CD4-positive, alpha-beta memory T cell (primary cell): ENCODE measurements at regions of chr1 and their contacts with region 1.

Region 1: DNA sequence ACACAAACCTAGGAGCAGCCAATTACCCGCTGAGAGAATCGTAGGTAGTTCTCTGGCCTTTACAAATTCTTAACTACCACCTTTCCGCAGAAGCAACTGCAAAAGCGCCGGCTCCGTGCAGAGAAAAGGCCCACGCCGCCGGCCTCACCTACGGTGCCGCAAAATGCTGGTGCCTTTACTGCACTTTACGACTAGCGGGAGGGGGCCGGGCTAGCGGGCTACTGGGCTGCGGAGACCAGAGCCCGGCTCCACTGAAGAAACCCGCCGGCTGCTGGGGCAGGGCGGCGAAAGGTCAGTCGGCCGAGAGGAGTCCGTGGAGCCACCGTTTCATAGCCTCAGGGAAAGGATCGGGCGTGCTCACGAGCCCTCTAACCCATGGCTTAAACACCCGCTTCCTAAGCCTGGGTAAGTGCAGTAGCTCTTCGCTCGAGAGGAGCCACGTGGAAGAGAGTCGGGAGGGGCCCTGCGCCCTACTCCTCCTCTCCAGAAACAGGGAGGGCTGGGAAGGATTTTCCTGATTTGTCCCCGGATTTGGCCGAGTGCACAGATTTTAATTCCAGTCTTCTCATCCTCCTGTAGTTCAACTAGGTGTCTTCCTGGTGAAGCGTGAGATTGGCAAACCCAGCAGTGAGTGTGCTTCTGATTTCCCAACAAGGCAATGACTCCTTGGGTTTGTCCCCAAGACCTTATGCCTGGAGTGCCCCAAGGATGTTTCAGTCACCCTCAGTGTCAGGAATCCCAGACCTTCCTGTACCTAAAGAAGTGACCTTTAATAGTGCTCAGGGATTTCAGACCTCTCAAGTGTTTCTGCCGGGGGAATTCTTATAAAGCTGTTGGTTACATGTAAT is at the start of gene DPH5:
- DNase-seq: peak; percentile 86 to 91 (median 87)
- H3K4me3 ChIP-seq: peak within 1 kb of the TSS; percentile 78 to 88
- H3K4me3 Mint-ChIP-seq: peak within 1 kb of the TSS; percentile 85 to 99 (median 96)
- H3K27ac ChIP-seq: peak within 1 kb of the TSS; percentile 76
- H3K27ac Mint-ChIP-seq: peak within 1 kb of the TSS; percentile 96 to 99 (median 98)
- H3K4me1 ChIP-seq: peaks cover 62% of the 10 kb centered on the region
- H3K4me1 Mint-ChIP-seq: peaks cover 46 to 81% (median 61%) of the 10 kb centered on the region in 4 donors
- H3K27me3 ChIP-seq: no peaks in the 10 kb centered on the region
- H3K27me3 Mint-ChIP-seq: no peaks in the 10 kb centered on the region
- total RNA-seq, gene DPH5: 49.3 to 58.3 TPM

Region 2: DNA sequence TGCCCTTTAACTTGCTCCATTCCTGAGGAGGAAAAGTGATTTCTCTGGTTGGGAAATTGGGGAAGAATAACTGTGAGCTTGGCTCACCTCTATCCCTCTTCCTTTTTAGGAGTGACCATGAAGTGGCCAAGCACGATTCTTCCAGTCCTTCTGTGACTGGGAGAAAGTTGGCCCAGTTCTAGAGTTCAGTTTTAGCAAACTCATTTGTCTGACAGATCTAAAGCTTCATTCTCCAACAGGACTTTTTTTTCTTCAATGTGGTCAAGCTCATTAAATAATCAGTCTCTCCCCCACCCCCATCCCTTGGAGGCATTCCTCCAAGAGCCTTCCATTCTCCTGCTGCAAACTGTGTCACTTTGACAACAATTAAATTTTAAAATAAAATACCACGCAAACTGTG is 1182.1 kb before region 1 on chr1:
- CTCF ChIA-PET with region 1: no interaction called
- POLR2A ChIA-PET with region 1: no interaction called
- intact Hi-C with region 1: no loop called
- DNase-seq: no peak
- H3K4me3 ChIP-seq: no peak overlapping the region
- H3K4me3 Mint-ChIP-seq: no peak overlapping the region
- H3K27ac ChIP-seq: no peak overlapping the region
- H3K27ac Mint-ChIP-seq: no peak overlapping the region
- H3K4me1 ChIP-seq: no peaks in the 10 kb centered on the region
- H3K4me1 Mint-ChIP-seq: peaks cover 0 to 5% (median 0%) of the 10 kb centered on the region in 4 donors
- H3K27me3 ChIP-seq: no peaks in the 10 kb centered on the region
- H3K27me3 Mint-ChIP-seq: no peaks in the 10 kb centered on the region

Region 3: DNA sequence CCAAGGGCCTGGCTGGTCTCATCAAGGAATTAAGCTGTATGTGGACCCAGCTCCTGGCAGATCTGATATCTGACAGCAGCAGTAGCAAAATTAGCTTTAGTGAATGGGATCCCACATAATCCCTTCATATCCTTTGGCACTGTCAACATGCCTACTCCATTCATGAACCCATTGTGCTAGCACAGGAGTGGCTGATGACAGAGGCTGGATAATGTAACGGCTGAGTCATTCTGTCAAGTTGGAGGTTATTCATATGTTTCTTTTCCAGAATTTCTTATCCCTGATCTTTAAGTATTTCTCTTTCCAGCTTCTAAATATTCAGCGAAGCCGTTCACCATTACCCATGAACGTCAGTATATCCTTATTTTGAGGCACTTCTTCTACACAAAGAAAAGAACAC is 215.5 kb before region 1 on chr1:
- CTCF ChIA-PET with region 1: no interaction called
- POLR2A ChIA-PET with region 1: no interaction called
- intact Hi-C with region 1: no loop called
- DNase-seq: no peak
- H3K4me3 ChIP-seq: no peak overlapping the region
- H3K4me3 Mint-ChIP-seq: no peak overlapping the region
- H3K27ac ChIP-seq: no peak overlapping the region
- H3K27ac Mint-ChIP-seq: no peak overlapping the region
- H3K4me1 ChIP-seq: no peaks in the 10 kb centered on the region
- H3K4me1 Mint-ChIP-seq: peaks cover 0 to 8% (median 3%) of the 10 kb centered on the region in 4 donors
- H3K27me3 ChIP-seq: peaks cover 7% of the 10 kb centered on the region
- H3K27me3 Mint-ChIP-seq: peaks cover 22 to 29% of the 10 kb centered on the region in 2 donors

Region 4: DNA sequence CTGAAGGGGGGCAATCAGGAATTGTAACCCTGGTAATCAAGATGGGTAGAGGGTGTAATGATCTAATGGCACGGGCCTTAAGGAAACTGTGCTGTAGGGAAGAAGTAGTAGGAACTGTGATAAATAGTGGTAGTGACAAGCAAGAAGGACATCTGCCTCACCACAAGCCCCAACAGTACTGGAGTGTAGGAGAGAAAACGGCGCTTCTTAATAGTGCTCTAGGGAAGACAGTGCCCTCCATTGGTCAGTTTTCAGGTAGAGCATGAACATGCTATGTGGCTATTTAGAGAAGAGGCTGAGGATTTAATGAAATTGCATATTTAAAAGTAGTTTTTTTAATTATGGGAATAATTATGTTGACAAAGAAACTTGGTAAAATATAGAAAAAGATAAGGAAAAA is 97.8 kb before region 1 on chr1:
- CTCF ChIA-PET with region 1: interaction called, 3 read pairs
- POLR2A ChIA-PET with region 1: interaction called, 6 read pairs
- intact Hi-C with region 1: loop called (anchors 1 kb)
- DNase-seq: no peak
- H3K4me3 ChIP-seq: peak overlapping the region in 1 of 2 donors; percentile 39
- H3K4me3 Mint-ChIP-seq: no peak overlapping the region
- H3K27ac ChIP-seq: peak overlapping the region; percentile 50
- H3K27ac Mint-ChIP-seq: no peak overlapping the region
- H3K4me1 ChIP-seq: peaks cover 95% of the 10 kb centered on the region
- H3K4me1 Mint-ChIP-seq: peaks cover 38 to 64% (median 49%) of the 10 kb centered on the region in 4 donors
- H3K27me3 ChIP-seq: no peaks in the 10 kb centered on the region
- H3K27me3 Mint-ChIP-seq: no peaks in the 10 kb centered on the region

Region 5: DNA sequence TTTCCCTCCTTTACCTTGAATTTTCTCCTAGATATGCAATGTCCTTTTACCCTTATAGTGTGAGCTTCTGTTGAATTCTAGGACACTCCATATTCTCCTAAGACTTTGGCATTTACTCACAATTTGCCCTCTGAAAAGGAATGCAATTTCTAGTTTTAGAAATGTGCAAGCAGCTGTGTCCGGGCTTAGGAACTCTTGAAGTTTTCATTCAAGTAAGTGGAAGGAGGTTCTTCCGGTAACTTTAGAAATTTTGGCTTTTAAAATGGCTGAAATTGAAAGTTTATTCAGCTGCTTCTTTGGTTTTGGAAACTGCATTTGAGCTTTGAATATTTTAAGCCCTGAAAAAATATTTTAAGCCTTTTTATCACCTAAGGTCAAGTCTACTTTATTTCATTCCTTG is 56.6 kb before region 1 on chr1:
- CTCF ChIA-PET with region 1: no interaction called
- POLR2A ChIA-PET with region 1: no interaction called
- intact Hi-C with region 1: no loop called
- DNase-seq: no peak
- H3K4me3 ChIP-seq: no peak overlapping the region
- H3K4me3 Mint-ChIP-seq: no peak overlapping the region
- H3K27ac ChIP-seq: no peak overlapping the region
- H3K27ac Mint-ChIP-seq: no peak overlapping the region
- H3K4me1 ChIP-seq: peaks cover 16% of the 10 kb centered on the region
- H3K4me1 Mint-ChIP-seq: peaks cover 27 to 48% (median 38%) of the 10 kb centered on the region in 4 donors
- H3K27me3 ChIP-seq: no peaks in the 10 kb centered on the region
- H3K27me3 Mint-ChIP-seq: no peaks in the 10 kb centered on the region

Region 6: DNA sequence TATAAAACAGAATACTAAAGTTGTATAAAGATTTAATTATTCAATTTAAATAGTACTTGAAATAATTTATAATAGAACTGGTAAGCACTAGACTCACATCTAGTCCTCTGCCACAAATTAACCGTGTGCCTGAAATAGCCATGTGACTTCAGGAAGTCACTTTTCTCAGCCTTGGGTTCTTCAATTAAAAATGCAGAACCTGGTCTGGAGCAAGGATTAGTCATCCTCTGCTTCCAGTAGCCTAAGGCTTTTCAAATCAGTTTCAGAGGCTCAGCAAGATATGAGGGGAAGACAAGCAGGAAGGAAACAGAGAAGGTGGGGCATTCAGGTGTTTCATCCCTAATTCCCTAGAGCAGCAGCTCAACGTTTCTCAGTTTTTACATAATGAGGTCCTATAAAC is 23.3 kb before region 1 on chr1:
- CTCF ChIA-PET with region 1: interaction called, 4 read pairs
- POLR2A ChIA-PET with region 1: interaction called, 10 read pairs
- intact Hi-C with region 1: no loop called
- DNase-seq: no peak
- H3K4me3 ChIP-seq: no peak overlapping the region
- H3K4me3 Mint-ChIP-seq: peak overlapping the region in 3 of 8 donors; percentile 10 to 71 (median 54)
- H3K27ac ChIP-seq: no peak overlapping the region
- H3K27ac Mint-ChIP-seq: peak overlapping the region; percentile 44 to 90 (median 76)
- H3K4me1 ChIP-seq: peaks cover 58% of the 10 kb centered on the region
- H3K4me1 Mint-ChIP-seq: peaks cover 46 to 64% (median 50%) of the 10 kb centered on the region in 4 donors
- H3K27me3 ChIP-seq: no peaks in the 10 kb centered on the region
- H3K27me3 Mint-ChIP-seq: no peaks in the 10 kb centered on the region

Region 7: DNA sequence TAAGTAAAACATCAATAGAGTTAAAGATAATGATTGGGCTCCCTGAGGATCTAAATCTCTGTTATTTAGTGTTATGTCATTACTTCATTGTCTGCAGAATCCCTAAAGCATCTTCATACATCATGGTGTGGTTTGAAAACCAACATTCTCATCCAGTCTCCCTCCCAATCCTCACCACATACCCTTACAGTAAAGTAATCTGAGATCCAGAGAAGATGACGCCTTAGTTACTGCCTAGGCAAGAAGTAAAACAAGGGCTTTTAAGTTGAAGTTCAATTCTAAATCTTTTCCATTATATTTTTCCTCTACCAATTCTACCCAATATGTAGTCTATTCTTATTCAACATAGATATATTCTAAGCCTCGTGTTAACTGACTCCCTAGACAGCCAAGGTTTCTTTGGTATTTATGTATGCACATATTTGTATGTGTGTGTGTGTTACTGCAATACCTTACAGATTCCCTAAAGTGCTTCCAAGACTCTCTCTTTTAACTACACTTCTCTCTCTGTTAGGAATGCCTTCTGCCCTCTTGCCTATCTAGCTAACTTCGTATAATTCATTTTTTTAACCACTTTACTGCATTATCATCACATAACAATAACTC is 17.5 kb before region 1 on chr1:
- CTCF ChIA-PET with region 1: interaction called, 4 read pairs
- POLR2A ChIA-PET with region 1: interaction called, 10 read pairs
- intact Hi-C with region 1: loop called (anchors 2 kb)
- DNase-seq: no peak
- H3K4me3 ChIP-seq: no peak overlapping the region
- H3K4me3 Mint-ChIP-seq: no peak overlapping the region
- H3K27ac ChIP-seq: no peak overlapping the region
- H3K27ac Mint-ChIP-seq: peak overlapping the region in 3 of 7 donors; percentile 2 to 43 (median 3)
- H3K4me1 ChIP-seq: peaks cover 39% of the 10 kb centered on the region
- H3K4me1 Mint-ChIP-seq: peaks cover 34 to 50% (median 41%) of the 10 kb centered on the region in 4 donors
- H3K27me3 ChIP-seq: no peaks in the 10 kb centered on the region
- H3K27me3 Mint-ChIP-seq: no peaks in the 10 kb centered on the region

Region 8: DNA sequence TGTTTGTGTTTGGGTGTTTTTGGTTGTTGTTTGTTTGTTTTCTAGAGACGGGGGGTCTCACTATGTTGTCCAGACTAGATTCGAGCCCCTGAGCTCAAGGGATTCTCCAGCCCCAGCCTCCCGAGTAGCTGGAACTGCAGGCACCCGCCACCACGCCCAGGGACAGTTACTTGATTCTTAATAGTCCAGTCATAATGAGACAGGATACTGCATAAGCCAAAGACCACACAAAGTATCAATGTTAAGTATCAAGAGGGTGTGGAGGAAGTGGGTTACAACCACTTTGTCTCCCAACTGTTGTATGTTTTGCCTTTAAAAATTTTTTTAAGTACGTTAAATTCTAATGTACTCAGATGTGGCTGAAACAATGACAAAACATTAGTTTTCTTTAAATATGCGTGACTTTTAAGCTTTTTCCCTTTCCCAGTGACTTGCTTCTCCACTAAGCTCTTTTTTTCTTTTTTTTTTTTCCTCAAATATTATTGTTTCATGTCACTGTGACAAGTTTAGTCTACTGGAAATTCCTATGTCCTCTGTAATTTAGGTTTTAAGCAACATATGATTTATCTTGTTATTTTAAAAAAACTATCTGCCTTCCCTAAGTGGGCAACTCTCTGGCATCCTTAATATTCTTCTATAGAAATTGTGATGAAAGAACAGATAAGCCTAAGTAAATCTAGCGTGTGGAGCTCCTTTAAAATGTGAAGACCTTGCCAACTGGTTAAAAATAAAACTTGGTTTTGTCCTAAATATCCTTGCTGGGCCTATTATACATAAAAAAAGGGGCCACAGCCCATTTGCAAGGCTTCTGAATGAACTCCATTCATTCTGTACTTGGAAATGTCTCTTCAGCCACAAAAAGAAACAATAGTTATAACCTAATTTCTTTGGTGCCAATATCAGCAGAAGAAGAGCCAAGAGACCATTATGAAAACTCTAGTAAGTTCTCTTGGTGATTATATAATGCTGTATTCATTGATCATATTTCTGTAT is 55.9 kb after region 1 on chr1:
- CTCF ChIA-PET with region 1: no interaction called
- POLR2A ChIA-PET with region 1: interaction called, 3 read pairs
- intact Hi-C with region 1: loop called (anchors 5 kb)
- DNase-seq: peak in 4 of 5 donors; percentile 44 to 60 (median 51)
- H3K4me3 ChIP-seq: peak overlapping the region in 1 of 2 donors; percentile 19
- H3K4me3 Mint-ChIP-seq: peak overlapping the region; percentile 53 to 89 (median 80)
- H3K27ac ChIP-seq: no peak overlapping the region
- H3K27ac Mint-ChIP-seq: peak overlapping the region; percentile 88 to 95 (median 91)
- H3K4me1 ChIP-seq: peaks cover 35% of the 10 kb centered on the region
- H3K4me1 Mint-ChIP-seq: peaks cover 29 to 67% (median 40%) of the 10 kb centered on the region in 4 donors
- H3K27me3 ChIP-seq: no peaks in the 10 kb centered on the region
- H3K27me3 Mint-ChIP-seq: no peaks in the 10 kb centered on the region

Region 9: DNA sequence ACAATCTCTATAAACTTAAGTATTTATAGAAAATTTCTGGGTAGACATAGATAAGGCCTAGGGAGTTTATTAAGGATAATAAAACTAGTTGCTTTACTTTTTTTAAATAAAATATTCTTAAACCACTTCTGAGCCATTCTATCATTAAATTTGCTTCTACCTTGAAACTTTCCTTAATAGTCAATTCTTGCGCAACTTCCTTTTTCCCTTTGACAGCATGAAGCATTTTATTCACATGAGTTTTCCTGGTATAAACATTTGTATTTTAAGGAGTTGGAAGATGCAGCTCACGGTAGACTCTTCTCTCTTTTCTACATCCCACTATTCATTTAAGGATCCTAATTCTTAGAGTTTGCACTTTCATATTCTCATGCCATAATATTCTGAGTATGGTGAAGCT is 75.5 kb after region 1 on chr1:
- CTCF ChIA-PET with region 1: no interaction called
- POLR2A ChIA-PET with region 1: no interaction called
- intact Hi-C with region 1: no loop called
- DNase-seq: no peak
- H3K4me3 ChIP-seq: no peak overlapping the region
- H3K4me3 Mint-ChIP-seq: no peak overlapping the region
- H3K27ac ChIP-seq: no peak overlapping the region
- H3K27ac Mint-ChIP-seq: no peak overlapping the region
- H3K4me1 ChIP-seq: no peaks in the 10 kb centered on the region
- H3K4me1 Mint-ChIP-seq: peaks cover 0 to 4% (median 1%) of the 10 kb centered on the region in 4 donors
- H3K27me3 ChIP-seq: no peaks in the 10 kb centered on the region
- H3K27me3 Mint-ChIP-seq: no peaks in the 10 kb centered on the region

Region 10: DNA sequence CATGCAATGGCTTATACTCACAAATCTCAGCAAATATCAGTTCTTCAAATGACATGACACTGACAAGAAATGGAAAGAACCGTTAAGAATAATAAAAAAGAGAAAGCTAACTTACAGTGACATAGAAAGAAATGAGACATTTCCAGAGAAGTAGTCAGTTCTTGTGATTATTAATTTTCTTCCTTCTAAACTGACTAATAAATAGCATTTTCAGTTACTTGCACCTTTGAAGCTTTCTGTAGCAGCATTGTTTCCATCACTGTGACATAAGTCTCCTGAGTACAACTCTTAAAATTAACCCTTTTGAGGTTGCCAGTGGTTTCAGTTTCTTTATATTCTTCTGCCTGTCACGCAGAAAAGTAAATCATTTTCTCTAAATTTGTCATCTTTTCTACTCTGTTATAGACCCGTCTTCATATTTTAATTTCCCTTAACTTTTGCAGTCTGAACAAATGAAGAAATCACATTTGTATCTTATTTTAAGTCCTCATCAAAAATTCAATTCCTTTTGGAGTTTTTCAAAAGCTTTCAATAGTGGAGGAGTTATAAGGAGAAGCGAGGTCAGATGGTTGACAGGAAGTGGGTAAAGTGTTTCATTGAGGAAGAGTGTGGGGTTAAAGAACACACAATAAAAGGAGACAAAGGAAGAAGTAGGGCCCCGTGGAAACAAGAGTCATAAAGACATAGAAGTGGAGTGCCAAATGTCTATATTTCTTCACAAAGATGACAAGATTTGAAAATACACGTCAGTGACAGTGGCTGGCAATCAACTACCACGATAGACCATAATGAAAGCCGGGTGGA is 153.0 kb after region 1 on chr1:
- CTCF ChIA-PET with region 1: no interaction called
- POLR2A ChIA-PET with region 1: no interaction called
- intact Hi-C with region 1: loop called (anchors 5 kb)
- DNase-seq: peak; percentile 20 to 42 (median 26)
- H3K4me3 ChIP-seq: peak overlapping the region in 1 of 2 donors; percentile 18
- H3K4me3 Mint-ChIP-seq: peak overlapping the region; percentile 54 to 84 (median 75)
- H3K27ac ChIP-seq: peak overlapping the region; percentile 7
- H3K27ac Mint-ChIP-seq: peak overlapping the region; percentile 84 to 97 (median 86)
- H3K4me1 ChIP-seq: peaks cover 23% of the 10 kb centered on the region
- H3K4me1 Mint-ChIP-seq: peaks cover 20 to 45% (median 24%) of the 10 kb centered on the region in 4 donors
- H3K27me3 ChIP-seq: no peaks in the 10 kb centered on the region
- H3K27me3 Mint-ChIP-seq: no peaks in the 10 kb centered on the region